ENCODE measurements at regions of chr1 and their contacts with region 1.

Region 1: DNA sequence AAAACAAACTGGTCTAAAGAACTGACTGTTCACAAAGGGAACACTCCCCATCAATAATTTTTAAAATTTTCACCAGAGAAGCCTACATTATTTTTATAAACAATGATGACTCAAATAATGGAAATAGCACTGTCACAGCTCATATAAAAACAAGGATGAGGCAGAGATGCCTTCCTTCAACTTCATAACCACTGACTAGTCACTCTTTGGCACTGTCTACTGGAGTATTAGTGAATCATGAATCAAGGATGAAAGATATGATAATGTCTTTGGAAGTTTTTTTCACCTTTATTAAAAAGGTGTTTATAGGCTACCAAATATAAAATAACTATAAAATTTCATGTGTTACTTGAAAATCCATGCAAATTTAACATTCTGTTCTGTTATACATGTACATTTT is 316.9 kb downstream of the VAV3 start:
- DNase-seq: peak; percentile 73
- H3K4me3 Mint-ChIP-seq: no peak overlapping the region
- H3K27ac Mint-ChIP-seq: peak overlapping the region; percentile 54
- H3K4me1 Mint-ChIP-seq: peaks cover 35% of the 10 kb centered on the region
- H3K27me3 Mint-ChIP-seq: no peaks in the 10 kb centered on the region
- CTCF ChIP-seq: no peak

Region 2: DNA sequence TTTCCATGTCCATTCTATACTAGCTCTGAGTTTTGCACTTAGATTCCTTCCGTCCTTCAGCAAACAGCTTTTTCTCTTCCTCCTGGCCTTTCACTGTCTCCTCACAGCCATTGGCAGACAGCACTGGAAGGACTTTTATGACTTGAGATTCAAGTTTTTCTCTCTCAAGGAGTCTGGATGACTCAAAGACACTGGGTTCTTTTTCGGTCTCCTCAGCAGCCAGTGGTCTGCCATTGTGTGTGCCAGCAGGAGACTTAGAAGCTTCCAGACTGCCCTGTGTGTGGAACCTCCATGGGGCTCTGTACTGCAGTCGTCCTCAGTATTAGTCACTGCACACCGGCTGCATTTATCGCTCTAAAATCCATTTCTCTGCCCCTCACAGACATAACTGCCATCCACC is 476.7 kb before region 1 on chr1:
- CTCF ChIA-PET with region 1: no interaction called
- POLR2A ChIA-PET with region 1: no interaction called
- intact Hi-C with region 1: no loop called
- DNase-seq: no peak
- H3K4me3 Mint-ChIP-seq: no peak overlapping the region
- H3K27ac Mint-ChIP-seq: no peak overlapping the region
- H3K4me1 Mint-ChIP-seq: no peaks in the 10 kb centered on the region
- H3K27me3 Mint-ChIP-seq: no peaks in the 10 kb centered on the region
- CTCF ChIP-seq: no peak

Region 3: DNA sequence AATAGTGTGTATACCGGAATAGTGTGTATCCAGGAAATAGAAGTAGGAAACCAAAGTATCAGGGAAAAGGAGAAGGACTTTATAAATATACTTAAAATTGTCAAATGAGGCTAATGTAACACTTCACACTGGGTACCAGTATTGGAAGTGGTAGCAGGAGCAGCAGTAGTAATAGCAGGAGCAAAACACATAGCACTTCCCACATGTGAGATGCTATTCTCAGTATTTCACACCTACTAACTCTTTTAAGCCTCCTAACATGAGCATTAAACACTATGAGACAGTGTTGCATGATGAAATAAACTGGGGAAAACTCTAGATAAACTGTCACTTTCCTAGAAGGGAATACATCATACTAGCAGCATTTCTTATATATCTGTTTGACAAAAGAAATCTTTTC is 59.8 kb before region 1 on chr1:
- CTCF ChIA-PET with region 1: no interaction called
- POLR2A ChIA-PET with region 1: no interaction called
- intact Hi-C with region 1: no loop called
- DNase-seq: no peak
- H3K4me3 Mint-ChIP-seq: no peak overlapping the region
- H3K27ac Mint-ChIP-seq: no peak overlapping the region
- H3K4me1 Mint-ChIP-seq: no peaks in the 10 kb centered on the region
- H3K27me3 Mint-ChIP-seq: no peaks in the 10 kb centered on the region
- CTCF ChIP-seq: no peak

Region 4: GRCh38 chr1:107669996-107670395 is 21.9 kb after region 1 on chr1:
- CTCF ChIA-PET with region 1: interaction called, 6 read pairs
- POLR2A ChIA-PET with region 1: interaction called, 16 read pairs
- intact Hi-C with region 1: no loop called
- DNase-seq: peak; percentile 86
- H3K4me3 Mint-ChIP-seq: no peak overlapping the region
- H3K27ac Mint-ChIP-seq: no peak overlapping the region
- H3K4me1 Mint-ChIP-seq: peaks cover 18% of the 10 kb centered on the region
- H3K27me3 Mint-ChIP-seq: no peaks in the 10 kb centered on the region
- CTCF ChIP-seq: no peak